ENCODE measurements at regions of chr5 and their contacts with region 1.

Region 1: GRCh38 chr5:35852084-35852734 is 4.5 kb upstream of the IL7R start:
- DNase-seq: peak in 6 of 9 donors; percentile 42 to 74 (median 56)
- ATAC-seq: no peak
- H3K4me3 ChIP-seq: peak overlapping the region; percentile 55
- H3K4me3 Mint-ChIP-seq: peak overlapping the region; percentile 85 to 100 (median 92)
- H3K27ac ChIP-seq: peak overlapping the region; percentile 98
- H3K27ac Mint-ChIP-seq: peak overlapping the region; percentile 97 to 100 (median 99)
- H3K4me1 ChIP-seq: peaks cover 52 to 56% of the 10 kb centered on the region in 2 donors
- H3K4me1 Mint-ChIP-seq: peaks cover 31 to 89% (median 72%) of the 10 kb centered on the region in 7 donors
- H3K27me3 ChIP-seq: no peaks in the 10 kb centered on the region
- H3K27me3 Mint-ChIP-seq: no peaks in the 10 kb centered on the region

Region 2: DNA sequence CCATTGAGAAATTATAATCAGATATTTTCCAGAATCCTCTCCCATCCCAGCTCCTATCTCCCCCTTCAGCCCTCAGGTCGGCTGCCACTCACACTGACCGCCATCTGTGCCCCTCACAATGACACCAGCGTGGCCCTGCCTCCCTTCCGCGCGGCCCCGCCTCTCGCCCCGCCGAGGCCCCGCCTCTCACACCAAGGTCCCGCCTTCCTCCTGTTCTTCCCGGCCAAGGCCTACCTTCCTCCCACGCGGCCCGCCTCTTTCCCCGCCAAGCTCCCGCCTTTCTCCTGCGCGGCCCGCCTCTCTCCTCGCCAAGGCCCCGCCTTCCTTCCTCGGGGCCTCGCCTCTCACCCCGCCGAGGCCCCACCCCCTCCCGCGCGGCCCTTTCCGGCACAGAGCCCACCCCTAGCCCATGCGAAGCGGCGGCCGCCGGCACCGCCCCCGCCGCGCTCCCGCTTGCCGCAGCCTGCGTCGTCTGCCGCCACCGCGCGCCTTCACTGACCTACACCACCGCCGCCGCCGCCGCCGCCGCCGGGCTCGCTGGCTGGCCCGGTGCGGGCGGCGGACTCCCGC is 923.0 kb before region 1 on chr5 and contains the start of gene DNAJC21:
- CTCF ChIA-PET with region 1: no interaction called
- POLR2A ChIA-PET with region 1: interaction called, 5 read pairs
- intact Hi-C with region 1: loop called in 1 of 2 experiments (anchors 2 kb)
- DNase-seq: peak; percentile 93 to 99 (median 97)
- ATAC-seq: peak; percentile 93
- H3K4me3 ChIP-seq: peak within 1 kb of the TSS; percentile 75
- H3K4me3 Mint-ChIP-seq: peak within 1 kb of the TSS; percentile 94 to 99 (median 96)
- H3K27ac ChIP-seq: peak within 1 kb of the TSS; percentile 93
- H3K27ac Mint-ChIP-seq: peak within 1 kb of the TSS; percentile 86 to 98 (median 94)
- H3K4me1 ChIP-seq: peaks cover 15 to 18% of the 10 kb centered on the region in 2 donors
- H3K4me1 Mint-ChIP-seq: peaks cover 19 to 44% (median 36%) of the 10 kb centered on the region in 7 donors
- H3K27me3 ChIP-seq: no peaks in the 10 kb centered on the region
- H3K27me3 Mint-ChIP-seq: no peaks in the 10 kb centered on the region
- total RNA-seq, gene DNAJC21: 43.9 to 66.4 (median 49.6) TPM

Region 3: DNA sequence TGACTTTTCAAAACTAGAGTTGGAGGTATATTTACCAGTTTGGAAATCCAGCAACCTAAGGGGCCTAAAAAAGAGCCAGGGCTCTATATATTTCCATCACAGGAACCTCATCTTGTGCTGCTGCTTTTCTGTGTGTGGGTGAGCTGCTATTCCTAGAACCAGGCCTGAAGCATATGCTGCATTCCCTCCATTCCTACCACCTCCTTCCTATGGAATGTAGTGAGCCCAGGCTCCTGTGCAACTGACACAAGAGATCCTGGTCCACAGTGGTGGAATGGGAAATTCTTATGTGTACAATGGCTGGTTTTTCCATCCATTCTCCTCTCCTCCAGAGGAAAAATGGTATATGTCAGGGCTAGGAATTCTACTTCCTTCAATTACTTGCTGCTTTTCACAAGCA is 195.5 kb before region 1 on chr5:
- CTCF ChIA-PET with region 1: interaction called, 11 read pairs
- POLR2A ChIA-PET with region 1: interaction called, 5 read pairs
- intact Hi-C with region 1: loop called in 1 of 2 experiments (anchors 2 kb)
- DNase-seq: no peak
- ATAC-seq: no peak
- H3K4me3 ChIP-seq: no peak overlapping the region
- H3K4me3 Mint-ChIP-seq: no peak overlapping the region
- H3K27ac ChIP-seq: no peak overlapping the region
- H3K27ac Mint-ChIP-seq: peak overlapping the region in 2 of 9 donors; percentile 16 to 45
- H3K4me1 ChIP-seq: peaks cover 0 to 5% of the 10 kb centered on the region in 2 donors
- H3K4me1 Mint-ChIP-seq: peaks cover 7 to 34% (median 19%) of the 10 kb centered on the region in 7 donors
- H3K27me3 ChIP-seq: no peaks in the 10 kb centered on the region
- H3K27me3 Mint-ChIP-seq: no peaks in the 10 kb centered on the region

Region 4: GRCh38 chr5:35741126-35741716 is 111.0 kb before region 1 on chr5:
- CTCF ChIA-PET with region 1: no interaction called
- POLR2A ChIA-PET with region 1: no interaction called
- intact Hi-C with region 1: no loop called
- DNase-seq: no peak
- ATAC-seq: no peak
- H3K4me3 ChIP-seq: no peak overlapping the region
- H3K4me3 Mint-ChIP-seq: no peak overlapping the region
- H3K27ac ChIP-seq: no peak overlapping the region
- H3K27ac Mint-ChIP-seq: no peak overlapping the region
- H3K4me1 ChIP-seq: no peaks in the 10 kb centered on the region
- H3K4me1 Mint-ChIP-seq: peaks cover 9 to 33% (median 16%) of the 10 kb centered on the region in 7 donors
- H3K27me3 ChIP-seq: no peaks in the 10 kb centered on the region
- H3K27me3 Mint-ChIP-seq: no peaks in the 10 kb centered on the region

Region 5: GRCh38 chr5:35815089-35815936 is 36.9 kb before region 1 on chr5:
- CTCF ChIA-PET with region 1: interaction called, 12 read pairs
- POLR2A ChIA-PET with region 1: interaction called, 1,069 read pairs
- intact Hi-C with region 1: loop called (anchors 1 kb)
- DNase-seq: peak in 2 of 9 donors; percentile 41 to 45
- ATAC-seq: no peak
- H3K4me3 ChIP-seq: peak overlapping the region; percentile 25
- H3K4me3 Mint-ChIP-seq: no peak overlapping the region
- H3K27ac ChIP-seq: peak overlapping the region; percentile 23
- H3K27ac Mint-ChIP-seq: no peak overlapping the region
- H3K4me1 ChIP-seq: peaks cover 67 to 88% of the 10 kb centered on the region in 2 donors
- H3K4me1 Mint-ChIP-seq: peaks cover 25 to 56% (median 43%) of the 10 kb centered on the region in 7 donors
- H3K27me3 ChIP-seq: no peaks in the 10 kb centered on the region
- H3K27me3 Mint-ChIP-seq: no peaks in the 10 kb centered on the region

Region 6: GRCh38 chr5:35838370-35839042 is 13.7 kb before region 1 on chr5:
- CTCF ChIA-PET with region 1: interaction called, 3 read pairs
- POLR2A ChIA-PET with region 1: interaction called, 1,069 read pairs
- intact Hi-C with region 1: loop called (anchors 1 kb)
- DNase-seq: no peak
- ATAC-seq: no peak
- H3K4me3 ChIP-seq: no peak overlapping the region
- H3K4me3 Mint-ChIP-seq: peak overlapping the region; percentile 4 to 68 (median 31)
- H3K27ac ChIP-seq: no peak overlapping the region
- H3K27ac Mint-ChIP-seq: peak overlapping the region in 8 of 9 donors; percentile 15 to 97 (median 66)
- H3K4me1 ChIP-seq: peaks cover 36 to 39% of the 10 kb centered on the region in 2 donors
- H3K4me1 Mint-ChIP-seq: peaks cover 34 to 85% (median 78%) of the 10 kb centered on the region in 7 donors
- H3K27me3 ChIP-seq: no peaks in the 10 kb centered on the region
- H3K27me3 Mint-ChIP-seq: no peaks in the 10 kb centered on the region

Region 7: DNA sequence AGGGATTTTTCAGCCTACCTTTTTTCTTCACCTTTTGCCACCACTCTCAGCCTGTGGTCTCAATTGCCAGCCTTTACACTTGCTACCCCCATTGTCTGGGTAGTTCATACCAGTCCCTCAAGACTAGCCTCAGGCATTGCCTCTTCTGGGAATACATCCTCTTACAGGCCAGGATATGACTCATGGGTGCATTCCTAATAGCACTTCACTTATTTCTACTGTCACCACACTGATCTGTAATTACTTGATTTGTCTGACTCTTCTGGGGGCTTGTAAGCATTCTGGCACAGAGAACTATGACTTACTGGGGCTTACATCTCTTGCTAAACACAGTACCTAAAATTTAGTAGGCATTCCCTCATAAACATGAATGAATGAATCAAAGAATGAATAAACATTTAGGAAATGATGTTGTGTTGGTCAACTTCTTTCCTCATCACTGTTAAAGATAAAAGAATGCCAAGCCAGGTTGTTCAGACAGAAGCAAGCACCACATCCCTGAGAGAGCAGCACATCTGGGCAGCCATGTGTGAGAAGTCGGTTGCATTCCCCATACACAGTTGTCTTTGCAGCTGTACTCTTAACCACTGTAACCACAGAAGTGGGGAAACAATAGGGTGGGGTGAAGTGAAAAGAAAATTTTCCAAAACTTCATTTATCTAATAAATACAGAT is 32.0 kb after region 1 on chr5:
- CTCF ChIA-PET with region 1: no interaction called
- POLR2A ChIA-PET with region 1: interaction called, 167 read pairs
- intact Hi-C with region 1: no loop called
- DNase-seq: no peak
- ATAC-seq: peak; percentile 57
- H3K4me3 ChIP-seq: no peak overlapping the region
- H3K4me3 Mint-ChIP-seq: peak overlapping the region in 8 of 10 donors; percentile 2 to 62 (median 18)
- H3K27ac ChIP-seq: no peak overlapping the region
- H3K27ac Mint-ChIP-seq: peak overlapping the region in 8 of 9 donors; percentile 5 to 90 (median 68)
- H3K4me1 ChIP-seq: peaks cover 10 to 25% of the 10 kb centered on the region in 2 donors
- H3K4me1 Mint-ChIP-seq: peaks cover 37 to 56% (median 51%) of the 10 kb centered on the region in 7 donors
- H3K27me3 ChIP-seq: no peaks in the 10 kb centered on the region
- H3K27me3 Mint-ChIP-seq: no peaks in the 10 kb centered on the region